ENCODE measurements at regions of chr10 and their contacts with region 1.

Region 1: GRCh38 chr10:33460505-33461294 is 126.2 kb upstream of the NRP1 start:
- DNase-seq: no peak
- H3K4me3 ChIP-seq: no peak overlapping the region
- H3K27ac ChIP-seq: no peak overlapping the region
- H3K4me1 ChIP-seq: no peaks in the 10 kb centered on the region
- H3K27me3 ChIP-seq: no peaks in the 10 kb centered on the region

Region 2: DNA sequence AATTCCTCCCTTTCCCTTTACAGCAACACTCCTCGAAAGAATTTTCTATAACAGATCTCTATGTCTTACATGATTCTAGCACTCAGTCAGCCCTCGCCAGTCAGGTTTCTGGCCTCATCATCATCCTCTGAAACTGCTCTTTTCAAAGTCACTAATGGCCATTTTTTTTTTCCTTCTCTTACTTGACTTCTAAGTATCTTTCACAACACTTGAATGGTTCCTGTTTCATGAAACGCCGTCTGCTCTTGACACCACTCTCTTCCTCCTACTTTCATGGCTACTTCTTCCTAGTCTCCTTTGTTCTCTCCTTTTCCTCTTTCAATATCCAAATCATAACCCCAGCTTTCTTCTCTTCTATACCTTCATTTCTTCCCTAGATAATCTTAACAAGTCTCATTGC is 25.8 kb before region 1 on chr10:
- CTCF ChIA-PET with region 1: no interaction called
- POLR2A ChIA-PET with region 1: interaction called, 10 read pairs
- DNase-seq: peak in 2 of 3 donors; percentile 2 to 3
- H3K4me3 ChIP-seq: no peak overlapping the region
- H3K27ac ChIP-seq: no peak overlapping the region
- H3K4me1 ChIP-seq: no peaks in the 10 kb centered on the region
- H3K27me3 ChIP-seq: peaks cover 0 to 5% (median 0%) of the 10 kb centered on the region in 5 experiments